Psoas muscle (tissue), 8 donors: ENCODE measurements at regions of chr7 and their contacts with region 1.

Region 1: DNA sequence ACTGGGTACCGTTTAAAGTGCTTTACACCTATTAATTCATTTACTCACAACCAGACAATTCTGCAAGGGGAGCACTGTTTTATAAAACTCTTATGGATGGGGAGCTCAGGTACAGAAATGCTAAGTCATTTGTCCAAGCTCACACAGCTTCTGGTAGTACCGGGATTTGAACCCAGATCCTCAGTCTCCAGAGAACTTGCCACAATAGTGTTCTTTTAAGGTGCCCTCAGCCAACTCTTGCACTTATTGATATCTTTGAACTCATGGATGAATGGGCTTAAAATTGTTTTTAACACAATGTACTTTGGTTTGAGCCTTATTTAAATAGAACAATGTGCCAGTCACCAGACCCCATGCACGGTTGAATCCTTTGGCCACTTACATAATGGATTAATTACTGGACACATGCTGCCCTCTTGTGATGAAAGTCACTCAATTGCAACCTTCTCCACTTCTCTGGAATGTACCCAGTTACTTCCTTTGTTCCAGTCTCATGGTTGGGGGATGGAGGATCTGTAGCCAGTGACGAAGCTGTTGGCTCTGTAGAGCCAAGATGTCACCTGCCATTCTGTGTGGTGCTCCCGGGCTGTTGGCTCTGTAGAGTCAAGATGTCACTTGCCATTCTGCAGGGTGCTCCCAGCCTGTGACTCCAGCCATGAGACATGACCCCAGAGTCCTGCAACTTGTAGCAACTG is 65.6 kb downstream of the NOD1 start:
- DNase-seq: no peak
- ATAC-seq: peak; percentile 82 to 98 (median 92)
- H3K4me3 ChIP-seq: no peak overlapping the region
- H3K27ac ChIP-seq: no peak overlapping the region
- H3K4me1 ChIP-seq: peaks cover 4% of the 10 kb centered on the region
- H3K27me3 ChIP-seq: no peaks in the 10 kb centered on the region
- CTCF ChIP-seq: peak; percentile 58

Region 2: GRCh38 chr7:30164567-30164966 is 248.4 kb before region 1 on chr7:
- intact Hi-C with region 1: loop called (anchors 2 kb)
- DNase-seq: no peak
- ATAC-seq: peak; percentile 75 to 90 (median 78)
- H3K4me3 ChIP-seq: no peak overlapping the region
- H3K27ac ChIP-seq: no peak overlapping the region
- H3K4me1 ChIP-seq: peaks cover 18% of the 10 kb centered on the region
- H3K27me3 ChIP-seq: no peaks in the 10 kb centered on the region
- CTCF ChIP-seq: peak; percentile 64

Region 3: GRCh38 chr7:30276203-30276900 is 136.6 kb before region 1 on chr7:
- intact Hi-C with region 1: loop called (anchors 2 to 5 kb)
- DNase-seq: no peak
- ATAC-seq: peak; percentile 39 to 76 (median 52)
- H3K4me3 ChIP-seq: no peak overlapping the region
- H3K27ac ChIP-seq: no peak overlapping the region
- H3K4me1 ChIP-seq: peaks cover 22% of the 10 kb centered on the region
- H3K27me3 ChIP-seq: no peaks in the 10 kb centered on the region
- CTCF ChIP-seq: peak; percentile 72

Region 4: DNA sequence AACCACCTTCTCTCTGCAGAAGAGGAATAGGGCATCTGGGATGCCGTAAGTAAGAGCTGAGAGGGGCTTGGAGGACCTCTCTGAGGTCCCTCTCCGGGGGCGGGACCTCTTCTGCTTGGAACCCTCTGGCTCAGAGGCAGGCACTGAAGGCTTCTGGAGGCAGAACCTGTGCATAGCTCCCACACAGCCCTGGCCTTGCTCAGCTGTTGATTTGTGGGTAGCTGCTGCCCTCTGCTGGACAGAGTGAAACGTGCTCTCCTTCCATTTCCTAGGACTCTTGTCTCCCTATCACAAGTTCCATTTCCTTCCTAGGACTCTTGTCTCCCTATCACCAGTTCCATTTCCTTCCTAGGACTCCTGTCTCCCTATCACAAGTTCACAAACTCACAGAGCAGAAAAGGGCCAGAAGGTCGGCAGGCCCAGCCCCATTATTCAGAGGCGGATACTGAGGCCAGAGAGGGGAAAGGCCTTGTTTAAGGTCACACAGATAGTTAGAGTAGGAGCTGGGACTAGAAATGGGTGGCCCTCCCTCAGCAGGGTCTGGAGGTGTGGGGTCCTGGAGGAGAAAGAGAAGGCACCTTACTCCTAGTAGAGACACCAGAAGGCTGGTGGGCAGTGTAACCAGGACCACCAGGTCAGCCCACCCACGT is 151.4 kb after region 1 on chr7:
- intact Hi-C with region 1: no loop called
- DNase-seq: peak; percentile 77 to 87
- ATAC-seq: peak; percentile 95 to 98 (median 96)
- H3K4me3 ChIP-seq: no peak overlapping the region
- H3K27ac ChIP-seq: no peak overlapping the region
- H3K4me1 ChIP-seq: no peaks in the 10 kb centered on the region
- H3K27me3 ChIP-seq: no peaks in the 10 kb centered on the region
- CTCF ChIP-seq: peak; percentile 91

Region 5: DNA sequence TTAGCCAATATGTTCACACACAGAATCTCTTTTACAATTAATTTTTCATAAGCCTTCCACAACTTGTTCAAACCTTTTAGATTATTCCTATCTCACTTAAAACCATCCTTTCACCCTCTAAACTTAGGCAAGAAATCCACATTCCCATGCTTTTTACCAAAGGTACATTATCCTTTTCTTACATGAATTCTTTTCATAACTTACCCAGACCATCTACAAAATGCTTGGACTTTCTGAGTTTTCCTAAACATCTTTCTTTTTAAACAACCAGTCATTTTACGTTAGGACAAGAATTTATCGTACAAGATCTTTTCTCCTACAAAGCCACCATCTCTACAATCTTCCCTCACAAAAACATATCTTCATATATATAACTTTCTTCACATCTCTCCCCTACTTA is 163.0 kb after region 1 on chr7:
- intact Hi-C with region 1: no loop called
- DNase-seq: no peak
- ATAC-seq: no peak
- H3K4me3 ChIP-seq: no peak overlapping the region
- H3K27ac ChIP-seq: no peak overlapping the region
- H3K4me1 ChIP-seq: no peaks in the 10 kb centered on the region
- H3K27me3 ChIP-seq: no peaks in the 10 kb centered on the region
- CTCF ChIP-seq: no peak